ENCODE measurements at regions of chr14 and their contacts with region 1.

Region 1: DNA sequence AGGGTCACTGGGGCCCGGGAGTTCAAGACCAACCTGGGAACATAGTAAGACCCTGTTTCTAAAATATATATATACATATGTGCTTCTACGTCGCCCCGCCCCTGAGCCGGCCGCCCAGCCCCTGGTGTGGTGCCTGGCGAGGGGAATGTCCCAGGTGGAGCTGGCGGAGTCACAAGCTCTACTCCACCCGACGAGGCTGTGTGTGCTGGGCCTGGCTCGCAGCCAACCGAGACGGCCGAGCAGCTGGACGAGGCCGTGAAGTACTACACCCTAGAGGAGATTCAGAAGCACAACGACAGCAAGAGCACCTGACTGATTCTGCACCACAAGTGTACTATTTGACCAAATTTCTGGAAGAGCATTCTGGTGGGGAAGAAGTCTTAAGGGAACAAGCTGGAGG is 22.1 kb upstream of the ITPK1 start:
- DNase-seq: no peak
- H3K4me3 ChIP-seq: no peak overlapping the region
- H3K27ac ChIP-seq: no peak overlapping the region
- H3K4me1 ChIP-seq: peaks cover 15% of the 10 kb centered on the region
- H3K27me3 ChIP-seq: no peaks in the 10 kb centered on the region
- CTCF ChIP-seq: no peak
- POLR2A ChIP-seq: no peak

Region 2: DNA sequence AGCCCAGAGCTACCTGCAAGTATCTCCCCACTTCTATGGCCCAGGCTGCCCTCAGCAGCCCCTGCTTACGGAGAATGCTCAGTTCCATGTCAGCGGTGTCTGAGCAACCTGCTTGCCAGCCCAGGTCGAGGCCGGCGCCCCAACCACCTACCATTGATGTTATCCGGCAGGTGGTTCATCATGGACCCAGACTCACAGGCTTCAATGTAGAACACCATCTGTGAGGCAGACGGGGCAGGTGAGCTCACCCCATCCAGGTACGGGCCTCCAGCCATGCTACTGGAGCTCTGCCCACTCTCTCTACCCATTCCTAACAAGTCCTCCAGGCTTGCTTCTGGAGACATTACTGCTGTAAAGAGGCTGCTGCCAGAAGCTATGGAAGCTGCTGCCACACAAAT is 425.2 kb before region 1 on chr14:
- intact Hi-C with region 1: no loop called
- DNase-seq: no peak
- H3K4me3 ChIP-seq: no peak overlapping the region
- H3K27ac ChIP-seq: no peak overlapping the region
- H3K4me1 ChIP-seq: no peaks in the 10 kb centered on the region
- H3K27me3 ChIP-seq: no peaks in the 10 kb centered on the region
- CTCF ChIP-seq: no peak
- POLR2A ChIP-seq: no peak

Region 3: DNA sequence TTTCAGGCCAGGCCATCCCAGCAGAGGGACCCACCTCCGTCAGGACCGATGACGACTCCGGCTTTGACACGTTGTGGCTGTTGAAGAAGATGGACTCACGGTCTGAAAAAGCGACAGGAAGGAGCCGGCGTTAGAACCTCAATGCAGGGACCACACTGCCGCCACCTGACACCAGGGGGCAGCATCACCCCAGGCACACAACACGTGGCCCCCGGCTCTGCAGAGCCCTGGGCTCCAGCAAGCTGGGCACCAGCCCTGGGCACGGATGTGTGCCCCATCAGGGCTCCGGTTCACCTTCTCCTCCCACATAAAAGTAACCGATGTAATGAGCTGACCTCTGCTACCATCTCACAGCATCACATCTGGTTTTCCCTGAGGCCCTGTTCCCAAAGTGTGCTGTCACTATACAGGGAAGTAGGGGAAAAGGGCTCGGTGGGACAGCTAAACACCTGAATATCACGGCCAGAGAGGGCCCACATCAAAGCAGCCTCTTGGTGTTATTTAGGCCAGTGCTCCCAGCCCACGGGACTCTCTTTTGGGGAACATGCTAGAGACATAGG is 185.9 kb before region 1 on chr14:
- intact Hi-C with region 1: loop called (anchors 5 kb)
- DNase-seq: no peak
- H3K4me3 ChIP-seq: no peak overlapping the region
- H3K27ac ChIP-seq: no peak overlapping the region
- H3K4me1 ChIP-seq: peaks cover 5% of the 10 kb centered on the region
- H3K27me3 ChIP-seq: no peaks in the 10 kb centered on the region
- CTCF ChIP-seq: peak; percentile 88 to 95 (median 94)
- POLR2A ChIP-seq: no peak